Breast epithelium (tissue), 4 donors: ENCODE measurements at regions of chr16 and their contacts with region 1.

Region 1: GRCh38 chr16:26969589-26970231 is 97.0 kb upstream of the C16orf82 start:
- DNase-seq: no peak
- H3K4me3 ChIP-seq: no peak overlapping the region
- H3K27ac ChIP-seq: no peak overlapping the region
- H3K4me1 ChIP-seq: no peaks in the 10 kb centered on the region
- H3K27me3 ChIP-seq: no peaks in the 10 kb centered on the region
- CTCF ChIP-seq: no peak
- POLR2A ChIP-seq: no peak

Region 2: GRCh38 chr16:26530584-26531289 is 439.0 kb before region 1 on chr16:
- intact Hi-C with region 1: loop called (anchors 5 kb)
- DNase-seq: no peak
- H3K4me3 ChIP-seq: no peak overlapping the region
- H3K27ac ChIP-seq: no peak overlapping the region
- H3K4me1 ChIP-seq: no peaks in the 10 kb centered on the region
- H3K27me3 ChIP-seq: no peaks in the 10 kb centered on the region
- CTCF ChIP-seq: no peak
- POLR2A ChIP-seq: no peak

Region 3: DNA sequence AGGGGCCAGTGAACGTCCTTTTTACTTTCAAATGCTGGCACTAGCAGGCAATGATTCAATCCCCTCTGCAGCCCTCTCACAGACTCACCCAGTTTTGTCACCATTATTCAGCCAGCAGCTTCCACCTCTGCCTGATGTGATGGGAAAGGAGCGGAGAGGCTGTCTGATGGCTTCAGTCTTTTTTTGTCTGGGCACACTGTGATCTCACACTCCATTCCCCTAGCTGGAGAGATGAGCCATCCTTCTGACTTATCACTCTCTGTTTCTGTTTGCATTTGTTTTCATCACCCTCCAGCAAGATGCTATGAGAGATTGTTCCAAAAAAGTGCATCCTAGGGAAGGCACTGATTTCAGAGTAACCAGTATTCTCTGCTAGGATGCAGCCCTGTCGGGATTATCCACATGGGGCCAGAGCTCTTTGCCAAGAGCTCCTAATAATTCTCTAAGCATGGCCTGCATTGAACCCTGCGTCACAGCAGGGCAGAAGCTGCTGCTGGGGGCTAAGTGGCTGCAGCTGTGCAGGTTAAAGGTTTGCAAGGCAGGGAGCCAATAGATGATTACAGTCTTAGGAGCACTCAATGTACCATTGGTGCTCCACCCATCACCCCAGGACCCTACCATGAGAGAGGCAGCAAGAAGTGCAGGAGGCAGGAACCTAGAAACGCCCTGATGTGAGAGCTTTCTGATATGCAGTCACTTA is 139.1 kb before region 1 on chr16:
- intact Hi-C with region 1: no loop called
- DNase-seq: no peak
- H3K4me3 ChIP-seq: no peak overlapping the region
- H3K27ac ChIP-seq: no peak overlapping the region
- H3K4me1 ChIP-seq: no peaks in the 10 kb centered on the region
- H3K27me3 ChIP-seq: no peaks in the 10 kb centered on the region
- CTCF ChIP-seq: no peak
- POLR2A ChIP-seq: no peak